ENCODE measurements at regions of chr19 and their contacts with region 1.

Region 1: DNA sequence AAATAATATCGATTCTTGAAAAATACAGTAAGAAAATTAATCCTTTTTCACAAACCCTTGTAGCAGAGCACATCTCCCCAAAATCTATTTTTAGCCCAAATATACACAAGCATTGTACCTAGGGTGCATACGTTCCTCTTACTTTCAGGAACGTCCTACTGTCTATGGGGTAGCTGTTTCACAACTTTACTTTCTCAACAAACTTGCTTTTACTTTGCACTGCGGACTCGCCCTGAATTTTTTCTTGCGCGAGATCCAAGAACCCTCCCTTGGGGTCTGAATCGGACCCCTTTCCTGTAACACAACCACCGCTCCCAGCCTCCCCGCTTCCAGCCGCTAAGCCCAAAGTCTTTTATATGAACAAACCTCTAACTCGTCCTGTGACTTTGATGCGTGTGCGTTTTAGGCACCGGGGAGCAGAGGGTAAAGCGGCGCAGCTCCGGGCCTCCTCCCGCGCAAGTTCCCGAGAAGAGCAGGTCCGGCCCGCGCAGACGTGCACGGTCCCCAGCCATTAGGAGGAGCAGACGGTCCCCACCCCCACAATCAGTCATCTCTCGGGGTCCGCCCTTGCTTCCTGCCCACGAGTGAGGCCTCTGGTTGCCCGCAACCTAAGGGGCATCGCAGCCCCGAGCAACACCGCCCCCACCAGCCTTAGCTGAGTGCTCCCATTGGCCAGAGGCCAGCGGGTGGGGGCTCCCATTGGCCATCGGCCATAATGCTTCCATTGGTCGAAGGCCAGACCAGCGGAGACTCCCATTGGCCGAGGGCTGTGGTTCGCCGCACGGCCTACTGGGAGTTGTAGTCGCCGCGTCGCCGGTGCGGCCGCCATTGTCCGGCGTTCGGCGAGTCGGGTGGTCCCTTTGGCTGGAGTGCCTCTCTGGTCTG is at the start of gene ZNF8:
- DNase-seq: peak; percentile 100
- ATAC-seq: peak; percentile 90
- H3K4me3 ChIP-seq: peak within 1 kb of the TSS; percentile 86
- H3K27ac ChIP-seq: peak within 1 kb of the TSS; percentile 51
- H3K4me1 ChIP-seq: peaks cover 24% of the 10 kb centered on the region
- H3K27me3 ChIP-seq: no peaks in the 10 kb centered on the region
- CTCF ChIP-seq: no peak
- total RNA-seq, gene ZNF8: 7.3 and 7.9 TPM in 2 replicates

Region 2: DNA sequence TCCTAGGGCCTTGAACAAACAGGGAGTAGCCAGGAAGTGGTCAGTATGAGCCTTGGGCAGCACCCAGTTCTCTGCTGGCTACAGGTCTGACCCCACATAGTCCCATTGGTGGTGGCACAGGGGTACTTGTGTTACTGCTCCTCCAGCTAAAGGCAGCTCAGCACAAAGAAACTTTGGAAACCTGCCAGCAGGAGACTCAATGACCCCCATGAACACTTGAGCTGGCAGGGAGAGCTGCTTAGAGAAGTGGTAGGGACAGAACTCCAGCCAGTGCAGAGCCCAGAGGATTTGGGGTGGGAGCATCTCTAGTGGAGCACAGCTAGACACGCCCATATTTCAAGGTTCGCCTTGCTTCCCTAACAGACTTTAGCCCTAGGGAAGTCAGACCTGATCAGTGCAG is 519.3 kb before region 1 on chr19:
- CTCF ChIA-PET with region 1: no interaction called
- POLR2A ChIA-PET with region 1: no interaction called
- intact Hi-C with region 1: no loop called
- DNase-seq: no peak
- ATAC-seq: no peak
- H3K4me3 ChIP-seq: no peak overlapping the region
- H3K27ac ChIP-seq: no peak overlapping the region
- H3K4me1 ChIP-seq: no peaks in the 10 kb centered on the region
- H3K27me3 ChIP-seq: no peaks in the 10 kb centered on the region
- CTCF ChIP-seq: no peak

Region 3: GRCh38 chr19:58178206-58178605 is 100.2 kb before region 1 on chr19:
- CTCF ChIA-PET with region 1: no interaction called
- POLR2A ChIA-PET with region 1: no interaction called
- intact Hi-C with region 1: no loop called
- DNase-seq: no peak
- ATAC-seq: no peak
- H3K4me3 ChIP-seq: no peak overlapping the region
- H3K27ac ChIP-seq: no peak overlapping the region
- H3K4me1 ChIP-seq: no peaks in the 10 kb centered on the region
- H3K27me3 ChIP-seq: no peaks in the 10 kb centered on the region
- CTCF ChIP-seq: no peak

Region 4: GRCh38 chr19:58228585-58229254 is 49.7 kb before region 1 on chr19 and contains the start of gene ZNF544:
- CTCF ChIA-PET with region 1: interaction called, 11 read pairs
- POLR2A ChIA-PET with region 1: no interaction called
- intact Hi-C with region 1: no loop called
- DNase-seq: peak; percentile 80
- ATAC-seq: peak; percentile 92
- H3K4me3 ChIP-seq: peak within 1 kb of the TSS; percentile 72
- H3K27ac ChIP-seq: peak within 1 kb of the TSS; percentile 69
- H3K4me1 ChIP-seq: peaks cover 14% of the 10 kb centered on the region
- H3K27me3 ChIP-seq: no peaks in the 10 kb centered on the region
- CTCF ChIP-seq: no peak
- total RNA-seq, gene ZNF544: 73.7 and 115 TPM in 2 replicates

Region 5: DNA sequence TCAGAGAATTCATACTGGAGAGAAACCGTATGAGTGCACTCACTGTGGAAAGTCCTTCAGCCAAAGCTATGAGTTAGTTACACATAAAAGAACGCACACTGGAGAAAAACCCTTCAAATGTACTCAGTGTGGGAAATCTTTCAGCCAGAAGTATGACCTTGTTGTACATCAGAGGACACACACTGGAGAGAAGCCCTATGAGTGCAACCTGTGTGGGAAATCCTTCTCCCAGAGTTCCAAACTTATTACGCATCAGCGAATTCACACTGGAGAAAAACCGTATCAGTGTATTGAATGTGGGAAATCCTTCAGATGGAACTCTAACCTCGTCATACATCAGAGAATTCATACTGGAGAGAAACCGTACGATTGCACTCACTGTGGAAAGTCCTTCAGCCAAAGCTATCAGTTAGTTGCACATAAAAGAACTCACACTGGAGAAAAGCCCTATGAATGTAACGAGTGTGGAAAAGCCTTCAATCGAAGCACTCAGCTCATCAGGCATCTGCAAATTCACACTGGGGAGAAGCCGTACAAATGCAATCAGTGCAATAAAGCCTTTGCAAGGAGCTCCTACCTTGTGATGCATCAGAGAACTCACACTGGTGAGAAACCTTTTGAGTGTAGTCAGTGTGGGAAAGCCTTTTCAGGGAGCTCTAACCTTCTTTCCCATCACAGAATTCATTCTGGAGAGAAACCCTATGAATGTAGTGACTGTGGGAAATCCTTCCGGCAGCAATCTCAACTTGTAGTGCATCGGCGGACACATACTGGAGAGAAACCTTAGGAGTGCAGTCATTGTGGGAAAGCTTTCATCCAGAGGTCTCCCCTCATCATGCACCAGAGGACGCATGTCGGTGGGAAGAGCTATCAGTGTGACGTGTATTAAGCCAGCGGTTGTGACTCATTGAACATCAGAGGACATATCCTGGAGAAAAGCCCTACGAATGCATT is 16.2 kb before region 1 on chr19:
- CTCF ChIA-PET with region 1: no interaction called
- POLR2A ChIA-PET with region 1: no interaction called
- intact Hi-C with region 1: no loop called
- DNase-seq: peak; percentile 29
- ATAC-seq: no peak
- H3K4me3 ChIP-seq: peak overlapping the region; percentile 29; the same call in 1 of the 2 replicates
- H3K27ac ChIP-seq: no peak overlapping the region
- H3K4me1 ChIP-seq: no peaks in the 10 kb centered on the region
- H3K27me3 ChIP-seq: no peaks in the 10 kb centered on the region
- CTCF ChIP-seq: no peak

Region 6: GRCh38 chr19:58305065-58305931 is 26.9 kb after region 1 on chr19 and contains the start of gene ERVK3-1:
- CTCF ChIA-PET with region 1: no interaction called
- POLR2A ChIA-PET with region 1: no interaction called
- intact Hi-C with region 1: loop called (anchors 2 kb)
- DNase-seq: peak; percentile 98
- ATAC-seq: peak; percentile 100
- H3K4me3 ChIP-seq: peak within 1 kb of the TSS; percentile 81
- H3K27ac ChIP-seq: peak within 1 kb of the TSS; percentile 8
- H3K4me1 ChIP-seq: peaks cover 8% of the 10 kb centered on the region
- H3K27me3 ChIP-seq: no peaks in the 10 kb centered on the region
- CTCF ChIP-seq: no peak
- total RNA-seq, gene ERVK3-1: 104 and 116 TPM in 2 replicates

Measured in PC-3 (cell line).